ENCODE measurements at regions of chr17 and their contacts with region 1.

Region 1: GRCh38 chr17:28057731-28058279 is 15.3 kb downstream of the NLK start:
- DNase-seq: no peak
- ATAC-seq: peak; percentile 93

Region 2: GRCh38 chr17:27892866-27893769 is 164.7 kb before region 1 on chr17 and contains the start of gene LYRM9:
- intact Hi-C with region 1: loop called in 1 of 2 experiments (anchors 10 kb)
- DNase-seq: peak; percentile 84 to 95
- ATAC-seq: peak; percentile 99
- total RNA-seq, gene LYRM9: 3.0 to 3.8 TPM

Region 3: DNA sequence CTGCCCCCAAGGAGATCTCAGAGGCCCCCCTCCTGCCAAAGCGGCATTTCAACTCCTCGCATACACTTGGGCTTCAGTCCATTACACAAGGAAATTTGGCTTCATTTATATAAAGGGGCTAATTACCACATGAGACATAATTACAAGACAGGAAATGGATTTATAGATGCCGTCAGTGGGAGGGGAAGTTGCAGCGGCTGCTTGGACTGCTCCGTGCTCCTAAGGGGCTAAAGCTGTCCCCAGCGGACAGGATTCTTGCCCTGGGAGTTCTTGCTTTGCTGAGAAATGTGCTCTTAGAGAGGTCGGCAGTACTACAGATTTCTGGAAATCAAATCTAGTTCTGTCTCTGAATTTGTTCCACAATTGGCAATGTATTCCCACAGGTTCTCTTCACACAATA is 72.5 kb before region 1 on chr17:
- intact Hi-C with region 1: no loop called
- DNase-seq: peak in 1 of 2 donors; percentile 4
- ATAC-seq: peak; percentile 46

Region 4: DNA sequence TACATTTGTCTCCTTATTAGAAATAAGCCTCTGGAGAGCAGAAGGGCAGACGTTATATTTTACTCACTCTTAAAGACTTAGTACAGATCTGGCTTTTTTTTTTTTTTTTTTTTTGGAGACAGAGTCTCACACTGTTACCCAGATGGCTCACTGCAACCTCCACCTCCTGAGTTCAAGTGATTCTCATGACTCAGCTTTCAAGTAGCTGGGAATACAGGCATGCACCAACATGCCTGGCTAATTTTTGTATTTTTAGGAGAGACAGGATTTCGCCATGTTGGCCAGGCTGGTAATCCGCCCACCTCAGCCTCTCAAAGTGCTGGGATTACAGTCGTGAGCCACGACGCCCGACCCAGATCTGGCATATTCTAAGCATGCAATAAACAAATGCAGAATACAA is 224.8 kb after region 1 on chr17:
- intact Hi-C with region 1: no loop called
- DNase-seq: no peak
- ATAC-seq: no peak

Measured in left colon (tissue), 2 donors.